Activated CD4-positive, alpha-beta memory T cell treated with anti-CD3 and anti-CD28 coated beads for 36 hours (primary cell): ENCODE measurements at regions of chr5 and their contacts with region 1.

Region 1: GRCh38 chr5:83473346-83474163 is 2.0 kb downstream of the VCAN start:
- DNase-seq: peak; percentile 78
- H3K4me3 Mint-ChIP-seq: peak overlapping the region; percentile 77
- H3K27ac Mint-ChIP-seq: no peak overlapping the region
- H3K4me1 Mint-ChIP-seq: peaks cover 34% of the 10 kb centered on the region
- H3K27me3 Mint-ChIP-seq: peaks cover 67% of the 10 kb centered on the region

Region 2: DNA sequence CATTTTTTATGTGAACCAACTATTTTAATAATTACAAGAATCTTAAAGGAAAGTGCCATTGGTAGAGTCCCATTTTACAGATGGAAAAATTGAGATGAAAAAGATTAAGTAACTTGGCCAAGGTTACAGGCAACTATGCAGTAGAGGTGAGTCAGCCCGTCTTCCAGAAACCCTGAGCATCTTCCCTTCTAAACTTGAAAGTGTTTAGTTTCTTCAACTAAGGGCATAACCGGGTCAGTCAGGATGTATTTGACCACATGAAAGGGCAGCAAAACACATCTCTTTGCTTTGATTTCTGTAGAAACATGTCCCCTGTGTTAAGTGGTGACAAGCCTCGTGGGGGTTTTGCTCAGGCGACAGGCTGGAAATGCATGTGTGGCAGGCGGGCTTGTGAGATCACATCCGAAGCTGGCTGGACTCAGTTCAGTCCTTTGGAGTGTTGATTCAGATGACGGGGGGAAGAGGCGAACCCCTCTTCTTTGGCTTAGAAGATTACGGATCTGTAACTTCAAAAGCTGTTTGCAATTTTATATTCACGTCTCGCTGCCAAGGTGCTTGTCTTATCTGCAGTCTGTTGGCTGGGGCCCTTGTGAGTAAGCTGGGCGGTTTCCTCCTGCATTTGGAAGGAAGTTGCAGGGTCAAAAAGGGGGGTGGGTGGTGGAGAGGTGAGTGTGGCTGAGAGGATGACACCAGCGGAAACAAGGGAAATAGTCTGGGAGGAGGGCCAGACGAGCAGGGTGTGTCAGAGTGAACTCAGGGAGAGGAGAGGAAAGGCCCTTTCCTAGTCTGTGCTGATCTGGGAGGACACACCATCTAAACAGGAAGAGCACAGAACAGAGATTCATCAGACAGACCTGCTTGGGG is 1116.5 kb before region 1 on chr5:
- CTCF ChIA-PET with region 1: interaction called, 3 read pairs
- POLR2A ChIA-PET with region 1: no interaction called
- intact Hi-C with region 1: loop called (anchors 2 kb)
- DNase-seq: peak; percentile 88
- H3K4me3 Mint-ChIP-seq: peak overlapping the region; percentile 62
- H3K27ac Mint-ChIP-seq: peak overlapping the region; percentile 99
- H3K4me1 Mint-ChIP-seq: peaks cover 52% of the 10 kb centered on the region
- H3K27me3 Mint-ChIP-seq: no peaks in the 10 kb centered on the region

Region 3: GRCh38 chr5:82676661-82677060 is 796.9 kb before region 1 on chr5:
- CTCF ChIA-PET with region 1: no interaction called
- POLR2A ChIA-PET with region 1: no interaction called
- intact Hi-C with region 1: loop called (anchors 10 kb)
- DNase-seq: peak; percentile 20
- H3K4me3 Mint-ChIP-seq: peak overlapping the region; percentile 42
- H3K27ac Mint-ChIP-seq: peak overlapping the region; percentile 67
- H3K4me1 Mint-ChIP-seq: peaks cover 23% of the 10 kb centered on the region
- H3K27me3 Mint-ChIP-seq: peaks cover 4% of the 10 kb centered on the region

Region 4: DNA sequence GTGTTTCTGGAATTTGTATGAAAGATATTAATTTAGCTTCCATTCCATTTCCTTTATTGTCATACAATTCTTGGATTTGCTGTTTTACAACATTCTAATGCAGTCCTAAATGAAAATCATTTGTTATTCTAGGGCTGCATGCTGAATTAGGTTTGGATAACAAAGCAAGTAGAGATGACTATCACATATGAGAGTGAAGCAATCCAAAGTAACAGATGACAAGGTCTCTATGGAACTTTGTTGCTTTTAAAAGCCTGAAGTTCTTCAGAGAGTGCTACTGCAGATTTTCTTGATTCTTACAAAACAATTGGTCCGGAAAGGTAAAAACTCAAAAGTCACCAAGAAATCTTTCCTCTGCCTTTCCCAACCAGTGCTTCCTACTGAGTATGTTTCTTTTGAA is 59.0 kb before region 1 on chr5:
- CTCF ChIA-PET with region 1: no interaction called
- POLR2A ChIA-PET with region 1: no interaction called
- intact Hi-C with region 1: no loop called
- DNase-seq: no peak
- H3K4me3 Mint-ChIP-seq: no peak overlapping the region
- H3K27ac Mint-ChIP-seq: no peak overlapping the region
- H3K4me1 Mint-ChIP-seq: no peaks in the 10 kb centered on the region
- H3K27me3 Mint-ChIP-seq: peaks cover 4% of the 10 kb centered on the region

Region 5: GRCh38 chr5:83430130-83431010 is 43.2 kb before region 1 on chr5:
- CTCF ChIA-PET with region 1: no interaction called
- POLR2A ChIA-PET with region 1: no interaction called
- intact Hi-C with region 1: loop called (anchors 1 kb)
- DNase-seq: peak; percentile 67
- H3K4me3 Mint-ChIP-seq: no peak overlapping the region
- H3K27ac Mint-ChIP-seq: no peak overlapping the region
- H3K4me1 Mint-ChIP-seq: no peaks in the 10 kb centered on the region
- H3K27me3 Mint-ChIP-seq: no peaks in the 10 kb centered on the region

Region 6: DNA sequence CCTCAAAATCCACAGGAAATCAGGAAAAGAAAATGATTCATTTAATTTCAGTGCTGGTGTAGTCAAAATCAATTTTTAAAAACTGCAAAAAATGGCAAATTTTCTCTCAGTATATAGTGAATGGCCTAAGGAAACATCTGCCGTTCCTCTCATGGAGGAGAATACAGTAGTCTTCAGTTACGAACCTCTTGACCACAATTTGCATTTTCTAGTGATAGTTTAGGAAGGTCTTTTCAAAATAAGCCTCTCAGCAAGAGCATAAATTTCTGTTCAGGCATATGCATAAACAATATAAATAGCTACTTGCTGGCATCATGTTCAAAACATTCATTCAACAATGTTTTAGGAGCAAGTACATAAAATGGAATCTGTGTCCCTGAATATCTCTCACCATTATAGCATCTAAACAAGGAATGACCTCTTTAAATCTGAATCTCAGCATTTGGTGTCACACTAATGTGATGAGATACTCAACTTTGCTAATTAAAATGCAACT is 213.6 kb after region 1 on chr5:
- CTCF ChIA-PET with region 1: no interaction called
- POLR2A ChIA-PET with region 1: no interaction called
- intact Hi-C with region 1: no loop called
- DNase-seq: no peak
- H3K4me3 Mint-ChIP-seq: no peak overlapping the region
- H3K27ac Mint-ChIP-seq: no peak overlapping the region
- H3K4me1 Mint-ChIP-seq: no peaks in the 10 kb centered on the region
- H3K27me3 Mint-ChIP-seq: peaks cover under 1% of the 10 kb centered on the region